RWPE1 (cell line): ENCODE measurements at regions of chr6 and their contacts with region 1.

Region 1: DNA sequence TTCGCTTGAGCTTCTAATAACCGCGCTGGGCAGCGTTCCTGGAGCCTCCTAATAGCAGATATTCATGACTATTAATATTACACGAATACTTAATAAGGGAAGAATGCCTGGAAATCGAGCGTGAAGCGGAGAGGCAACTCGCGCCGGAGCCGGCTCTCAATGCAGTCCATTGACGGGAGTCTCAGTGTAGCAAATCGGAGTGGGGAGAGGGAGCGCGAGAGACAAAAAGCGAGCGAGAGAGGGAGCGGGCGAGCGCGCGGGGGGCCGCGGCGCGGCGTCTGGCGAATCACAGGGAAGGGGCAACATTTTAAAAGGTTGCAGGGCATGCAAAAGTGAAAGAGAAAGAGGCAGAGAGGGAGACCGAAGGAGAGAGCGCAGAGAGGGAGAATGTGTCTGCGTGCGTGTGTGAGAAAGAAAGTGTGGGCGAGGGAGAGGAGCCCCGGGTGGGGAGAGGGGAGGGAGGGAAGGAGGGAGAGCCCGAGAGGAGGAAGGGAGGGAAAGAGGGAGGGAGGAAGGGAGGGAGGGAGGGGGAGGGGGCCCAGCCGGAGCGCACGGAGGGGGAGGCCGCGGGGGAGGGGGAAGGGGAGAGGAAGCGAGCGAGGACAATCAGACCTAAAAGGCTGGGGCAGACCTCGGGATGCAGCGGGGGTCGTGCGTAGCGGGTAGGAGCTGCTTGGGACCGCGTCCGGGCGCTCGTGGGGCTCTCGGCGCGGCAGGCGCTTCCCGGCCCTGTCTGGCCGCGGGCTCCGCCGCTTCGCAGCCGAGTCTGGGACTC is 2.7 kb downstream of the TFAP2A start:
- DNase-seq: peak; percentile 72
- H3K27ac ChIP-seq: peak overlapping the region; percentile 99
- CTCF ChIP-seq: no peak

Region 2: GRCh38 chr6:10429638-10430427 is 17.7 kb after region 1 on chr6:
- CTCF ChIA-PET with region 1: interaction called, 26 read pairs
- POLR2A ChIA-PET with region 1: interaction called, 6 read pairs
- DNase-seq: peak; percentile 50
- H3K27ac ChIP-seq: peak overlapping the region; percentile 73
- CTCF ChIP-seq: peak; percentile 78